Aorta (tissue), 5 donors: ENCODE measurements at regions of chr9 and their contacts with region 1.

Region 1: DNA sequence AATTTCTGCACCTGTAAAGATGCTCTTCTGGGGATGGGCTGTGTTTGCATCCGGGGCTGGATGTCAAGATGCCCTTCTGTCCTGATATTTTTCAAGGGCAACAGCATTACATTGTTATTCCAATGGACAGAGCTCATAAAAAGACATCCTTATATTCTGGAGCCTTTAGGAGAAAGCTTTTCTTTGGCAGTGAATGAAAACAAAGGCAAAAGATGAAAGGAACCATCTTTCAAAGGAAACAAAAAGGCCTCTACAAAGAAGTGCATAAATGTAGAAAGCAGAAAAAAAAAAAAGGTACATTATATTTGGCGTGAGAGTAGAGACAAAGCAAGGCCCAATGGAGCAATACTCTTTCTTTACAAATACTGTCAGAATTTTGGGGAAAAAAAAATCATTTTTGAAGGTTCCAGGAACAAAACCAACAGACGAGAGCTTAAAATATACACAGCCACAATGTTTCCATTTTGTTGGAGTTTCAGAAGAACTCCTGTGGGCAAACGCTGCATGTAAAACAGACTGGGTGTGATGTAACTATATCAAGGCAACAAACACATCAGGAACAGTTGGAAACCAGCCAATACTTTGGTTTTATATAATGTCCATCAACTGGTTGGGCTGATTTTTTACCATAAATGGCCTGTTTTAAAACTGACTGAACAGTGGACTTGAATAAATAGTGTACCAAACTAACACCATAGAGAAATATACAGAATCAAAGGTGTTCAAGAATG is 885.6 kb upstream of the DMAC1 start:
- DNase-seq: no peak
- ATAC-seq: no peak
- H3K4me3 ChIP-seq: no peak overlapping the region
- H3K27ac ChIP-seq: no peak overlapping the region
- H3K4me1 ChIP-seq: peaks cover 0 to 2% of the 10 kb centered on the region in 2 donors
- H3K27me3 ChIP-seq: no peaks in the 10 kb centered on the region

Region 2: DNA sequence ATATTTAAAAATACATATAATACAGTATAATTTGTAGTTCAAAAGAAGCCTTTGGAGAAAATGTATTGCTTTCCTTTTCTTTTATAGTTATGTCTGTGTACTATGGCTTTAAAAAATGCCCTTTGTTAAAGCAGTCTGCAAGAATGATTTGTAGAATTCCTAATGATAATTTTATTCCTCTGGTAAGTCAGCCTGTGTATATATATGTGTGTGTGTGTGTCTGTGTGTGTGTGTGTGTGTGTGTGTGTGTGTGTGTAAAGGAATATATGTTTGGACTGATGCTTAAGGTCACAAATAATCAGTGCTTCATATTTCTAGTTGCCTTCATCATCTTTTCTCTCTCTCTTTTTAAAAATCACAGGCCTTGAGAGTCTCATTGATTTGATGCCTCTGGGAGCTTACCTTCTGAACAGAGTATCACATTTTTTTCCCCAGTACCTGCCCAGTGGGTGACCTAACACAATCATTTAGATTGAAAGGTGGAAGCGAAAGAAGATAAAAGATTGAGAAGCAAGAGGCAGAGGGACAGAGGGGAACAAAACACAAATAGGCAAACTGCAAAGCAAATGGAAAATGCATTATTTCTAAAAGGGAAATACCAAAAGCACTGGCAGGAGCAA is 176.4 kb before region 1 on chr9:
- intact Hi-C with region 1: loop called in 1 of 2 experiments (anchors 10 kb)
- DNase-seq: no peak
- ATAC-seq: no peak
- H3K4me3 ChIP-seq: no peak overlapping the region
- H3K27ac ChIP-seq: no peak overlapping the region
- H3K4me1 ChIP-seq: no peaks in the 10 kb centered on the region
- H3K27me3 ChIP-seq: no peaks in the 10 kb centered on the region

Region 3: GRCh38 chr9:9117866-9118265 is 432.7 kb after region 1 on chr9:
- intact Hi-C with region 1: no loop called
- DNase-seq: no peak
- ATAC-seq: no peak
- H3K4me3 ChIP-seq: no peak overlapping the region
- H3K27ac ChIP-seq: no peak overlapping the region
- H3K4me1 ChIP-seq: no peaks in the 10 kb centered on the region
- H3K27me3 ChIP-seq: no peaks in the 10 kb centered on the region